ENCODE measurements at regions of chr19 and their contacts with region 1.

Region 1: GRCh38 chr19:8513687-8514504 is at the start of gene ZNF414:
- DNase-seq: peak; percentile 97 to 98 (median 97)
- ATAC-seq: peak; percentile 93 to 96 (median 95)
- H3K4me3 ChIP-seq: peak within 1 kb of the TSS; percentile 19 to 94 (median 86)
- H3K27ac ChIP-seq: peak within 1 kb of the TSS; percentile 95 to 100 (median 99)
- H3K4me1 ChIP-seq: peaks cover 8 to 62% (median 17%) of the 10 kb centered on the region in 12 donors
- H3K27me3 ChIP-seq: no peaks in the 10 kb centered on the region
- CTCF ChIP-seq: peak in 1 of 12 donors; percentile 6
- POLR2A ChIP-seq: peak in 1 of 2 donors; percentile 82
- total RNA-seq, gene ZNF414: 5.6 to 17.2 (median 13.7) TPM

Region 2: DNA sequence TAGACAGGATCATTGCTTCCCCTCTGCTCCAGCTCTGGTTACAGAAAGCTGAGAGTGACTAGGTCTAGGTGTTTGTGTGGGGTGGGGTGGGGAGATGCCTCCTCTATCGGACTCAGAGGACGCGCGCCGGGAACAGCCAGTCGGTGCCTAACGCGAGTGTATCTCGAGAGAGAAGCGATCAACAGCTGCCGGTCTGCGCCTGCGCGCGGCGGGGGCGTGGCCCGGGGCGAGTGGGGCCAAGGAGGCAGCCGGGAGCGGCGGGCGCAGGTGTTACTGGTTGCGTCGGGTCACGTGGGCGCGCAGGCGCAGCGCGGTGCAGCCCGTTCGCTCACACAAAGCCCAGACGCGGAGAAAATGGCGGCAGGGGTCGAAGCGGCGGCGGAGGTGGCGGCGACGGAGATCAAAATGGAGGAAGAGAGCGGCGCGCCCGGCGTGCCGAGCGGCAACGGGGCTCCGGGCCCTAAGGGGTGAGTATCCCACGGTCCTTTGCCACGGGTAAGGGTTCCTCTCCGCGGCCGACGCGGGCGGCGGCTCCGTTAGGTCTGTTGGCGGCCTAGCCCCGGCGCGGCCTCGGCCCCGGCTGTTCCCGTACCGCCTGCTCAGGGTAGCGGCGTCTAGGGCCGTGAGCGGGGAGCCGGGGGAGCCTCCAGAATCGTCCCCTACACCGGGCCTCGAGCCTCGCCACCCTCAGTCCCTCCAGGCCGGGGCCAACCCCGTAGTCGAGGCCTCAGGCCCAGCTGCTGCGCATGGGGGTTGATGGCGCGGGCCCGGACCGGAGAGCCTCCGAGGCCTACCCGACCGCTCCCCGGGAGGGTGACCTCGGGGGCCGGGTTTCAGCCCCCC is 69.0 kb before region 1 on chr19 and contains the start of gene HNRNPM:
- intact Hi-C with region 1: loop called in 2 of 10 experiments (anchors 5 to 10 kb)
- DNase-seq: peak; percentile 100
- ATAC-seq: peak; percentile 94 to 98 (median 98)
- H3K4me3 ChIP-seq: peak within 1 kb of the TSS; percentile 71 to 100 (median 97)
- H3K27ac ChIP-seq: peak within 1 kb of the TSS; percentile 82 to 99 (median 96)
- H3K4me1 ChIP-seq: peaks cover 14 to 47% (median 40%) of the 10 kb centered on the region in 12 donors
- H3K27me3 ChIP-seq: no peaks in the 10 kb centered on the region
- CTCF ChIP-seq: no peak
- POLR2A ChIP-seq: peak; percentile 32 to 88
- total RNA-seq, gene HNRNPM: 46.7 to 111 (median 95.3) TPM

Region 3: DNA sequence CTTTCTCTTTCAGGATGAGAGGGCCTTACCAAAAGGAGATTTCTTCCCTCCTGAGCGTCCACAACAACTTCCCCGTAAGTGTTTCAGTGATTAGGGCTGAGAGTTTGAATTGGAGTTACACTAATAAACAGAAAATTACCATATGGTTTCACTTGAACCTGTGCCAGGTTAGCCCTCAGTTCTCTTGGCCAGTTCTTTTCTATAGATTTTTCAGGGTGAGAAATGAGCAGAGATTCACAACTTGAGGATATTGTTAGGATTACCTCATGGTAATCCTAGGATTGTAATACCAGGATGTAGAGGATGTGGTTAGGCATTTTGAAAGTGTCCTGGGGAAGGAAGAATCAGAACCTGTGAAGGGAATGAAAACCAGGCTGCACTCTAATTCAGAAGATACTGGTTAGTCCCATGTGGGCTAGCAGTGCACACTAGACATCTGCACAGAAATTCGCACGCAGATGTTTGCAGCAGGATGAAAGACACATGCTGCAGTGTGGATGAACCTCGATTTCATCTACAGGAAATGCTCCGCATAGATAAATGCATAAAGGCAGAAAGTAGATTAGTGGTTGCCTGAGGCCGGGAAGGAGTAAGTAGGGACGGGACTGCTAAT is 45.0 kb before region 1 on chr19:
- intact Hi-C with region 1: no loop called
- DNase-seq: no peak
- ATAC-seq: no peak
- H3K4me3 ChIP-seq: no peak overlapping the region
- H3K27ac ChIP-seq: peak overlapping the region in 1 of 12 donors; percentile 80
- H3K4me1 ChIP-seq: peaks cover 0 to 33% (median 10%) of the 10 kb centered on the region in 12 donors
- H3K27me3 ChIP-seq: no peaks in the 10 kb centered on the region
- CTCF ChIP-seq: no peak
- POLR2A ChIP-seq: no peak

Measured in heart left ventricle (tissue), 16 donors.